ENCODE measurements at regions of chr13 and their contacts with region 1.

Region 1: GRCh38 chr13:87923753-87924152 is 252.6 kb downstream of the SLITRK5 start:
- DNase-seq: no peak
- ATAC-seq: no peak
- H3K4me3 ChIP-seq: no peak overlapping the region
- H3K27ac ChIP-seq: no peak overlapping the region
- H3K4me1 ChIP-seq: no peaks in the 10 kb centered on the region
- H3K27me3 ChIP-seq: no peaks in the 10 kb centered on the region
- CTCF ChIP-seq: no peak
- POLR2A ChIP-seq: no peak

Region 2: GRCh38 chr13:87810391-87810801 is 113.4 kb before region 1 on chr13:
- in situ Hi-C with region 1: loop called in 1 of 4 experiments (anchors 25 kb)
- intact Hi-C with region 1: no loop called
- DNase-seq: no peak
- ATAC-seq: no peak
- H3K4me3 ChIP-seq: no peak overlapping the region
- H3K27ac ChIP-seq: no peak overlapping the region
- H3K4me1 ChIP-seq: no peaks in the 10 kb centered on the region
- H3K27me3 ChIP-seq: no peaks in the 10 kb centered on the region
- CTCF ChIP-seq: no peak
- POLR2A ChIP-seq: no peak